ENCODE measurements at regions of chr6 and their contacts with region 1.

Region 1: DNA sequence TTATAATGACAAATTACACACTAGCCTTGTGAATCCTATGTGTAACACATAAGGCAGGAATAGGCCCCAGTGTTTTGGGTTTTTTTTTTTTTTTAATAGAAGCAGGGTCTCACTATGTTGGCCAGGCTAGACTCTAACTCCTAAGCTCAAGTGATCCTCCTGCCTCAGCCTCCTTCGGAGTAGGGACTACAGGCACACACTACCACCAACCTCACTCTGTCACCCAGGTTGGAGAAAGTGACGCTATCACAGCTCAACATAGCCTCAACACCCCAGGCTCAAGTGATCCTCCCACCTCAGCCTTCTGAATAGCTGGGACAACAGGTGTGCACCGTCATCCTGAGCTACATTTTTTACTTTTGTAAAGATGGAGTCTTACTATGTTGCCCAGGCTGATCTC is 205.8 kb upstream of the RREB1 start:
- DNase-seq: no peak
- ATAC-seq: no peak
- H3K4me3 Mint-ChIP-seq: no peak overlapping the region
- H3K27ac Mint-ChIP-seq: no peak overlapping the region
- H3K4me1 Mint-ChIP-seq: peaks cover 17% of the 10 kb centered on the region
- H3K27me3 Mint-ChIP-seq: no peaks in the 10 kb centered on the region
- CTCF ChIP-seq: no peak

Region 2: GRCh38 chr6:6918216-6918983 is 16.5 kb after region 1 on chr6:
- CTCF ChIA-PET with region 1: no interaction called
- POLR2A ChIA-PET with region 1: interaction called, 10 read pairs
- DNase-seq: no peak
- ATAC-seq: no peak
- H3K4me3 Mint-ChIP-seq: no peak overlapping the region
- H3K27ac Mint-ChIP-seq: no peak overlapping the region
- H3K4me1 Mint-ChIP-seq: no peaks in the 10 kb centered on the region
- H3K27me3 Mint-ChIP-seq: no peaks in the 10 kb centered on the region
- CTCF ChIP-seq: no peak

Region 3: GRCh38 chr6:6930223-6930880 is 28.4 kb after region 1 on chr6:
- CTCF ChIA-PET with region 1: no interaction called
- POLR2A ChIA-PET with region 1: no interaction called
- DNase-seq: no peak
- ATAC-seq: no peak
- H3K4me3 Mint-ChIP-seq: no peak overlapping the region
- H3K27ac Mint-ChIP-seq: no peak overlapping the region
- H3K4me1 Mint-ChIP-seq: peaks cover 8% of the 10 kb centered on the region
- H3K27me3 Mint-ChIP-seq: no peaks in the 10 kb centered on the region; the same call in 1 of the 2 replicates
- CTCF ChIP-seq: no peak

Measured in WTC11 (cell line).